ENCODE measurements at regions of chr20 and their contacts with region 1.

Region 1: GRCh38 chr20:36447101-36447500 is 94.2 kb upstream of the MYL9 start:
- DNase-seq: no peak
- ATAC-seq: no peak
- H3K4me3 ChIP-seq: no peak overlapping the region
- H3K27ac ChIP-seq: no peak overlapping the region
- H3K4me1 ChIP-seq: no peaks in the 10 kb centered on the region
- H3K27me3 ChIP-seq: no peaks in the 10 kb centered on the region
- CTCF ChIP-seq: no peak

Region 2: DNA sequence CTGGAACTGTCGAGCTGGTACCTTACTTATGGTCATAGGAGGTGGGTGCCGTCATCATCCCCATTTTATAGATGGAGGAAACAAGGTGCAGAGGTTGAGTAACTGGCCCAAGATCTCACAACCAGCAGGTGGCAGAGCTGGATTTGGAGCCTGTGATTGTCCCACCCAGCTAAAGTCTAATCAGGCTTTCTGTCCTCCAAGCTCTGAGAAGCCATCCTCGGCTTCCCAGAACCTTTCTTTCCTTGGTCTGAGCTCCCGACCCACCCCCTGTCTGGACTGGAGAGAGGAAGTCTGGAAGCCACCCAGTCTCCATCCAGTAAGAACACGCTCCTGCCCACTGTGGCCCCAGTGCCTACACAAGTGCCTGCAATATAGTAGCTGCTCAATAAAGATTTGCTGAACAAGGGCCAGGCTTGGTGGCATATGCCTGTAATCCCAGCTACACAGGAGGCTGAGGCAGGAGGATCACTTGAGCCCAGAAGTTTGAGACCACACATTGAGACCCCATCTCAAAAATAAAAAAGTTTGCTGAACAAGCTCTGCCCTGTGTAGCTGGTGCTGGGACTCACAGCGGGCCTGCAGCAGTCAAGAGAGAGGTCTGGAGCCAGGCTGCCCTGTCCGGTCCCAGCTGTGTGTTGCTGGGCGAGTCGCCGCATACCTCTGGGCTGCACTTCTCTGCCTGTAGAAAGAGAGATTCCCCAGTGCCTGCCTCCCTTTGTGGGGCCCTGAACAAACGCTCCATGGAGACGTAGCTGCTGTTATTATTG is 173.5 kb before region 1 on chr20:
- intact Hi-C with region 1: loop called in 1 of 10 experiments (anchors 10 kb)
- DNase-seq: no peak
- ATAC-seq: no peak
- H3K4me3 ChIP-seq: no peak overlapping the region
- H3K27ac ChIP-seq: no peak overlapping the region
- H3K4me1 ChIP-seq: no peaks in the 10 kb centered on the region
- H3K27me3 ChIP-seq: peaks cover 0 to 40% (median 29%) of the 10 kb centered on the region in 7 donors
- CTCF ChIP-seq: peak in 5 of 9 donors; percentile 19 to 38 (median 28)

Measured in heart right ventricle (tissue), 16 donors.